Lower lobe of right lung (tissue), 2 donors: ENCODE measurements at regions of chr2 and their contacts with region 1.

Region 1: DNA sequence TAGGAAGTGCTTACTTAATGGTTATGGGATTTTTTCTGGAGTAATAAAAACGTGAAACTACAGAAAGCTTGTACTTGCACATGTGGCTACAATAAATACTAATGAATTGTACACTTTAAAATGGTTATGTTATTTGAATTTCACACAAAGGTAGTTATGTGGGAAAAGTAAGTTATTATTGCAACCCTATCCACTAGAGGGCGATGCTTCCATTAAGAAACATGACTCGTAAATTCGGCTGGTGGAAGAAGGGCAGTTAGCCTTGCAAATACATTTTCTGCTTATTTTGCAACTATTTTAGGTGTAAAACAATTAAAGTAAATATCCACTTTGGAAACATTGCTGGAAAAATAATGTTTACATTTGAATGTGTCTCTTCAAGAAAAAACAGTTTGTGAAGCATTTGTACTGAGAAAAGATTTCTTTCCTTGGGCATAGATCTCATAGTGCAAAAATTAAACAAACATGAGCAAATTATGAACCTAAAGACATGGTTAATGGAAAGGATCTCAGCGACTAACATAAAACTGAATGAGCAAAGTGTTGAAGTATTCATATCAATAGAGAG is 68.1 kb upstream of the CSRNP3 start:
- DNase-seq: no peak
- ATAC-seq: peak; percentile 58 to 63
- H3K4me3 ChIP-seq: no peak overlapping the region
- H3K27ac ChIP-seq: no peak overlapping the region
- H3K4me1 ChIP-seq: no peaks in the 10 kb centered on the region
- H3K27me3 ChIP-seq: no peaks in the 10 kb centered on the region
- CTCF ChIP-seq: peak; percentile 68

Region 2: DNA sequence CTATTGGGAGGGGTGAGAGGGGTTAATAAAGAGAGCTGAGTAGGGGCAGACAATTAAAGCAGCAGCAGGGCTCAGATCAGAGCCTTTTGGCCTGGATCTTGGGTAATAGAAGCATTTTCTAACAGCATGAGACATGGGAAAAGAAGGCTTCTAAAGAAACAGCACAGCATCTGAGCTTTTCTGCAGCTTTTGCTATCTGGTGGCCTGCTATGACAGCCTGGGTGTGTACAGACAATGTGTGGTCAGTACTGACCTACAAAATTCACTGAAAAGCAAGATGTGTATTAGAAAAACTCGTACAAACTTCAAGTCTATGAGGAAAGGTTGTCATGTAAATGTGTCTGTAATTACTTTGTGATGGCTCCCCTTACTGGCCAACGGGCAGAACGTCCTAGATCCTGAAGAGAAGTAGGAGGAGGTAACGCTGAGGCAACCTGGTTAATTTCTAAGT is 297.1 kb after region 1 on chr2:
- intact Hi-C with region 1: loop called (anchors 10 kb)
- DNase-seq: no peak
- ATAC-seq: peak; percentile 37 to 62
- H3K4me3 ChIP-seq: no peak overlapping the region
- H3K27ac ChIP-seq: no peak overlapping the region
- H3K4me1 ChIP-seq: no peaks in the 10 kb centered on the region
- H3K27me3 ChIP-seq: no peaks in the 10 kb centered on the region
- CTCF ChIP-seq: peak; percentile 49